ENCODE measurements at regions of chr1 and their contacts with region 1.

Region 1: DNA sequence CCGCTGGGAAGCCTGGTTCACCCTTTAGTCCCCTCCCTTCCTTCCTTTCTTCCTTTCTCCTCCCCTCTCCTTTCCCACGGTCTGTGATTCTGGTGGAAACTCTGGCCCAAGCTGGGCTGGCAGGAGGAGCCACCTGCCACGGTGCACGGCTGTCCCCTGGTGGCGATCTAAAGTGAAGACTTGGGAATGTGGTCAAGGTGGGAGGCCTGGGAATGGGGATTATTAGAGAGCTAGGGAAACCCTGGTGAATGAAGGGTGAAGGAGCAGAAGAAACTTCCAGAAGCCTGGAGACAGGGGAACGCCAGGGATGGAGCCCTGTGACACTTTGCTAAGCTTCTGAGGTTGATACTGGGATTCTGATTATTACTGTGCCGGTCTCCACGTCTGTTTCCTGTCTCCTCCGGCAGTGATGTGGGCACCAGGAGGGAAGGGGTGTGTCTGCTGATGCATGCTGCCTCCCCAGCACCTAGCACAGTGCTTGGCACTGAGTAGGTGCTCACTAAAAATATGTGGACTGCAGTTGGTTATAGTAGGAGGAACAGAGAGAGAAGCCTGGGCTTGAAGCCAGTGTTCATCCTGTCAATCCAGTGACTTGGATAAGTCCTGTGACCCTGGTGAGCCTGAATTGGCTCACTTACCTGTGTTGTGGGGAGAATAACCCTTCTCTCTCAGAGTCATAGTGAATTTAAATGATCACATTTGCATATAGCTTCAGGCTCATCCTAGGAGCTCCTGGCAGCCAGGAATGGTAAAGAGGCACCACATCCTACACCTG is 71.2 kb upstream of the NBPF3 start:
- DNase-seq: peak; percentile 92
- H3K4me3 ChIP-seq: no peak overlapping the region
- H3K27ac ChIP-seq: no peak overlapping the region
- H3K4me1 ChIP-seq: peaks cover 7% of the 10 kb centered on the region
- H3K27me3 ChIP-seq: no peaks in the 10 kb centered on the region
- CTCF ChIP-seq: peak; percentile 97 to 98
- POLR2A ChIP-seq: no peak

Region 2: DNA sequence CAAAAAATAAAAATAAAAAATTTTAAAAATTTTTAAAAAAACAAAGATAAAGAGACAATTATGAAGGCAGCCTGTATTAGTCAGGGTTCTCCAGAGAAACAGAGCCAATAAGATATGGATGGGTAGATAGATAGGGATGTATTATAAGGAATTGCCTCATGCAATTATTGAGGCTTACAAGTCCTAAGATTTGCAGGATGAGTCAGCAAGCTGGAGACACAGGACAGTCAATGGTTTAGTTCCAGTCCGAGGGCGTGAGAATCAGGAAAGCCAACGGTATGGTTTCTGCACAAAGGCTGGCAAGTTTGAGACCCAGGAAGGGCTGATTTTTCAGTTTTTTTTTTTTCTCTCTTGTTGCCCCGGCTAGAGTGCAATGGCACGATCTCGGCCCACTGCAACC is 167.9 kb before region 1 on chr1:
- CTCF ChIA-PET with region 1: interaction called, 22 read pairs
- POLR2A ChIA-PET with region 1: no interaction called
- dilution Hi-C with region 1: no loop called
- intact Hi-C with region 1: no loop called
- DNase-seq: no peak
- H3K4me3 ChIP-seq: no peak overlapping the region
- H3K27ac ChIP-seq: no peak overlapping the region
- H3K4me1 ChIP-seq: no peaks in the 10 kb centered on the region
- H3K27me3 ChIP-seq: peaks cover 0 to 4% of the 10 kb centered on the region in 2 experiments
- CTCF ChIP-seq: no peak
- POLR2A ChIP-seq: no peak

Region 3: GRCh38 chr1:21244986-21245687 is 123.6 kb before region 1 on chr1:
- CTCF ChIA-PET with region 1: interaction called, 16 read pairs
- POLR2A ChIA-PET with region 1: no interaction called
- dilution Hi-C with region 1: loop called (anchors 10 kb)
- intact Hi-C with region 1: no loop called
- DNase-seq: no peak
- H3K4me3 ChIP-seq: no peak overlapping the region
- H3K27ac ChIP-seq: no peak overlapping the region
- H3K4me1 ChIP-seq: no peaks in the 10 kb centered on the region
- H3K27me3 ChIP-seq: no peaks in the 10 kb centered on the region
- CTCF ChIP-seq: peak; percentile 57 to 65
- POLR2A ChIP-seq: no peak

Region 4: DNA sequence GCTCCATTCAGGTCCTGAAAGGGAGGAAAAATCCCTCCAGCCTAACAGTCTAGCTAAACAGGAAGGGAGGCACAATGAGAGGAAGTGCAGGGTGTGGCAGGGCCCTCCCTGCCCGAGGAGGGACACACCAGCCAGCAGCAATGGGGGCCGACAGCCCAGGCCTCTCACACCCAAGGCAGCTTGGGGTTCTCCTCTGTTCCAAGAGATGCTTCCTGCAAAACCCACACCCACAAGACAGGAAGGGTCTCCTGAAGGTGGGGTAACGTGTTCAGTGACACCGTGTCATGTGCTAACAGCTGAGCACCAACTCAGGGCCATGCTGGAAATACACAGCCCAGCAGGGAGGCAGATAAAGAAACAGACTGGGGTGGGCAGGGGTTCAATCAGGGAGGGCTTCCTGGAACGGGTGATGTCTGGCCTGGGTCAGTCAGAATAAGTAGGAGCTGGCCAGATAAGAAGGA is 88.7 kb before region 1 on chr1:
- CTCF ChIA-PET with region 1: interaction called, 14 read pairs
- POLR2A ChIA-PET with region 1: no interaction called
- dilution Hi-C with region 1: no loop called
- intact Hi-C with region 1: no loop called
- DNase-seq: peak; percentile 92
- H3K4me3 ChIP-seq: peak overlapping the region in 1 of 3 experiments; percentile 68
- H3K27ac ChIP-seq: peak overlapping the region; percentile 98
- H3K4me1 ChIP-seq: peaks cover 64% of the 10 kb centered on the region
- H3K27me3 ChIP-seq: no peaks in the 10 kb centered on the region
- CTCF ChIP-seq: no peak
- POLR2A ChIP-seq: peak; percentile 40

Region 5: DNA sequence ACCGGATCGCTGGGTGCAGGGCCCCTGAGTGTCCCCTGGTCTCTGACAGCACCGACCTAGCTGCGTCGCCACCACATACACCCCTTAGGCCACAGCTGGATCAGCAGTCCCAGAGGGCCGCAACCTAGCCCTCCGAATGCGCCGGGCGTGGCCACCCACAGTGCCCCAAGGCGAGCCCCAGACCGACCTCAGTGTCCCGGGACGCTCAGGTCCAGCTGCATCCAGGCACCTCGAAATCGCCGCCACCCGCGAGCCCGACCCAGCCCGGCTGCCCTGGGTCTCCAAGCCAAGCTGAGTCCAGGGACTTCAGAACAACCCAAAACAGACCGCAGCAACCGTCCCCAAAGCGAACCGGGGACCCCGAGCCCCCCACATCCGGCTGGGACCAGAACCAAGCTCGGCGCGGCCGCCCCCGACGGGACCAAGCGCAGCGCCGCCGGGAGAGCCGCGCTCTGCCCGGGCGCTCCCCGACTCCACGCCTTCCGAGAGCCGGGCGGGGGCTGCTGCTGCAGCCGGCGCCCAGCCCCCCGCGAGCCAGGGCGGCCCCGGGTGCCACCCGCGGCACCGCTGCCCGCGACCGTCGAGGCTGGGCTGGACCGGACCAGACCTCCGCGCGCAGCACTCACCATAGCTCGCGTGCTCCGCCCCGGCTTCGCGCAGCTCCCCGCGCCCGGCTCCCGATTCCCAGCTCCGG is 23.8 kb before region 1 on chr1:
- CTCF ChIA-PET with region 1: interaction called, 20 read pairs
- POLR2A ChIA-PET with region 1: no interaction called
- dilution Hi-C with region 1: no loop called
- intact Hi-C with region 1: loop called (anchors 1 kb)
- DNase-seq: no peak
- H3K4me3 ChIP-seq: peak overlapping the region; percentile 40 to 82 (median 66)
- H3K27ac ChIP-seq: peak overlapping the region; percentile 14
- H3K4me1 ChIP-seq: peaks cover 38% of the 10 kb centered on the region
- H3K27me3 ChIP-seq: no peaks in the 10 kb centered on the region
- CTCF ChIP-seq: no peak
- POLR2A ChIP-seq: no peak

Region 6: DNA sequence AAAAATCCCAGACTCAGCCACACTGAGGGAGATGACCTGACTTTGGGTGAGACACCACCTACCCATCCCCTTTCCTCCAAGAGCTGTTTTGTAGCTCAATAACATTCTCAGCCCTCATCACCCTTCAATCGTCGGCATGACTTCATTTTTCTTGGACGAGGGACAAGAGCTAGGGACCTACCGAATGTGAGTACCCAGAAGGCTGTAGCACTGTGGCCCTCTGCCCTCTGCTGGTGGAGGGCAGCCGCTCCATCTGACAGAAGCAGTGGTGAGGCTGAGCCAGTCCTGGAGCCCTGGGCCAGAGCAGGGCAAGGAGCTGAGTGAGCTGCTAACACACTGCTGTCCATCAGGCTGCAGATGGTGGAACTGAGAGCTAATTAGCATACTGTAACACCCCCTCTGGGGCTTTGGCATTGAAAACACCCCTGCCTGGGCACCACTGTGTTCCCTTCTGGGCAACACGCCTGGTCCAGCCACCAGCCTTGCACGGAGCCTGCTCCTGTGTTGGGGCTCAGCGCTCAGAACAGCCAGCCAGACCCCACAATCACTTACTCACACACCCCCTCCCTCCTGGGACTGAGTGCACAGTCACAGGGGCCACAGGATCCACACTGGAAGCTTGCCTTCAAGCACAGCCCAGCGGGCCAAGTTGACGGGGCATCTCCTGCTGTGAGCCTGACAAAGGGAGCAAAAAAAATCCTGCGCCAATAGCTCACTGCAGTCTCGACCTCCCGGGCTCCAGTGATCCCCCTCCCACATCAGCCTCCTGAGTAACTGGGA is 122.3 kb after region 1 on chr1:
- CTCF ChIA-PET with region 1: interaction called, 41 read pairs
- POLR2A ChIA-PET with region 1: no interaction called
- dilution Hi-C with region 1: no loop called
- intact Hi-C with region 1: loop called (anchors 1 kb)
- DNase-seq: peak; percentile 30
- H3K4me3 ChIP-seq: no peak overlapping the region
- H3K27ac ChIP-seq: no peak overlapping the region
- H3K4me1 ChIP-seq: no peaks in the 10 kb centered on the region
- H3K27me3 ChIP-seq: peaks cover 5 to 7% of the 10 kb centered on the region in 2 experiments
- CTCF ChIP-seq: peak; percentile 40 to 53
- POLR2A ChIP-seq: no peak

Region 7: GRCh38 chr1:21594935-21595897 is 226.5 kb after region 1 on chr1:
- CTCF ChIA-PET with region 1: interaction called, 71 read pairs
- POLR2A ChIA-PET with region 1: no interaction called
- dilution Hi-C with region 1: no loop called
- intact Hi-C with region 1: loop called (anchors 1 kb)
- DNase-seq: peak; percentile 49
- H3K4me3 ChIP-seq: no peak overlapping the region
- H3K27ac ChIP-seq: no peak overlapping the region
- H3K4me1 ChIP-seq: no peaks in the 10 kb centered on the region
- H3K27me3 ChIP-seq: peaks cover 0 to 5% of the 10 kb centered on the region in 2 experiments
- CTCF ChIP-seq: peak; percentile 67 to 82
- POLR2A ChIP-seq: no peak